HepG2 (cell line): ENCODE measurements at regions of chr19 and their contacts with region 1.

Region 1: DNA sequence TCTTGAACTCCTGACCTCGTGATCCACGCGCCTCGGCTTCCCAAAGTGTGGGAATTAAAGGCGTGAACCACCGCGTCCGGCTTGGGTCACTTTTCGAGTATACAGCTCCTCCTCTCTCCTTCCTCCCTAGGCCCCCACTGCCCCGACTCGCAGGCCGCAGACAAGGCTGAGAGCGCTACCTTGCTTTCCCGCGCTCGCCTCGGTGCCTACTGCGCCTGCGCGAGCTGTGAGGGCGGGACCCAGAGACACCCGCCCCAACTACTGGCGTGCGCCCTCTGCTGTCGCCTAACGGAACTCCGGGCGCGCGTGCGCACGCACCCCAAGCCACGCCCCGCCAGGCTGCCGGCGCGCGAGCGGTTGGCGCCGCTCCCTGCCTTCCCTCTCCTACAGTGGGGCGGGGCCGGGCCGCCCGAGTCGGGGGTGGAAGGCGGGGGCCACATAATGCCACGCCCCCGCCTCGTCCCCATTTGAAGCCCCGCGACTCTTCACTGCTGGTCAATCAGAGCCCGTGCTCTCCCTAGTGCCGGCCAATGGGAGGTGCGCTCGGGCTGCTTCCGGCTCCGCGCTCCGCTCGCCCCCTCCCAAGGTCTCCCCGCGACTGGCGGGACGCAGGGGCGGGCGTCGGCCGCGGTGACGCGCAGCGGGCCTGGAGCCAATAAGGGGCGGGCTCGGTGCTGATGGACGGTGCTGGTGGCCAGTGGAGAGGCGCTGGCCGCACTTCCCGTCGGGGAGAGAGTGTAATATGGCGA is at the start of gene RAB8A:
- DNase-seq: peak; percentile 97
- ATAC-seq: peak; percentile 96
- H3K4me3 ChIP-seq: peak within 1 kb of the TSS; percentile 94 to 95 (median 95)
- H3K27ac ChIP-seq: peak within 1 kb of the TSS; percentile 77
- H3K4me1 ChIP-seq: peaks cover 47% of the 10 kb centered on the region
- H3K27me3 ChIP-seq: no peaks in the 10 kb centered on the region; a peak in 1 of 5 replicates
- CTCF ChIP-seq: peak; percentile 94
- EP300 ChIP-seq: no peak
- POLR2A ChIP-seq: peak; percentile 34 to 54; a peak in 2 of 4 replicates
- RAD21 ChIP-seq: peak; percentile 97
- total RNA-seq, gene RAB8A: 44.8 and 45.0 TPM in 2 replicates

Region 2: DNA sequence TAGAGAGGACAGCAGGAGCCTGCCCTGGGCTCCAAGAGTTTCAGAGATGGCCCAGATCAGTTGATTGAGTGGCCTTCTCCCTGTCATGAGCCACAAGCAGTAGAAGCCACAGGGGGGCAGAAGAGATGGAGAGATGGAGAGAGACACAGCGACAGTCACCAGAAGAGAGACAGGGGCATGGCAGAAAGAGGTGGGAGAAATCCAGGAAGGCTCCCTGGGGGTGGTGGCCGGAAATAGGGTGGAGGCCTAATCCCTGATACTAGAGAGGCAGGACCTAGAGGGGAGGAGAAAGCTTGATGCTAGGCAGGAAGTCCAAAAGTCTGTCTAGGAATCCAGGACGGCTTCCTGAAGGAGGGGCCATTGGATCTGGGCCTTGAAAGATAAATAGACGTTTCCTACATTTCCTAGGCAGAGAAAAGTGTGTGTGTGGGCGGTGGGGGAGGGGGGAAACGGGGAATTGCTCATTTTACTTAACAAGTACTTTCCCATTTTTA is 44.7 kb before region 1 on chr19:
- CTCF ChIA-PET with region 1: interaction called, 4 read pairs
- POLR2A ChIA-PET with region 1: interaction called, 18 read pairs
- in situ Hi-C with region 1: no loop called
- intact Hi-C with region 1: loop called (anchors 2 kb)
- DNase-seq: peak; percentile 81
- ATAC-seq: peak; percentile 66
- H3K4me3 ChIP-seq: no peak overlapping the region
- H3K27ac ChIP-seq: no peak overlapping the region
- H3K4me1 ChIP-seq: peaks cover 51% of the 10 kb centered on the region
- H3K27me3 ChIP-seq: no peaks in the 10 kb centered on the region
- CTCF ChIP-seq: peak; percentile 86
- EP300 ChIP-seq: no peak
- POLR2A ChIP-seq: no peak
- RAD21 ChIP-seq: peak; percentile 82

Region 3: DNA sequence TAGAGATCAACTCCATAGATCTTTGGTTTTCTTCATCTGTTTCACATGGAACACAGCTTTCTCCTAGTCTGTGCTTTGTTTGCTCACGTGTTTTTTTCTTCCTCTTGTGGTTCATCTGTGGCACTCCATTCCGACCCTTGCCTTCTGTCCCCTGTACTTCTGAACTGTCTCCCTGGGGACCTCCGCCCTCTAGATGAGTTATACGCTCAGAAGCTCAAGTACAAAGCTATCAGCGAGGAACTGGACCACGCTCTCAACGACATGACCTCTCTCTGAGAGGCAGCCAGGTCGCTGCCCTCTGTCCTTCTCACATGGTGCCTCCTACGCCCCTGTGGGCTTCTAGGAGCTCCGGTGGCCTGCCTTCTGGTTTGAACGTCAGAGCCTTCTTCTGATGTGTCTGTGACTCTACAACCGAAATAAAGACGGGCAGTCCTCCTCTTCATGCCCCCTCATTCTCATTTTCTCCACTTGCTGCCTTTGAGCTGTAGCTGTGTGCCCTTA is 16.2 kb before region 1 on chr19:
- CTCF ChIA-PET with region 1: no interaction called
- POLR2A ChIA-PET with region 1: interaction called, 11 read pairs
- in situ Hi-C with region 1: no loop called
- intact Hi-C with region 1: no loop called
- DNase-seq: no peak
- ATAC-seq: no peak
- H3K4me3 ChIP-seq: no peak overlapping the region
- H3K27ac ChIP-seq: peak overlapping the region; percentile 53
- H3K4me1 ChIP-seq: peaks cover 89% of the 10 kb centered on the region
- H3K27me3 ChIP-seq: no peaks in the 10 kb centered on the region
- CTCF ChIP-seq: no peak
- EP300 ChIP-seq: no peak
- POLR2A ChIP-seq: no peak
- RAD21 ChIP-seq: no peak